ENCODE measurements at regions of chr10 and their contacts with region 1.

Region 1: GRCh38 chr10:15168781-15169554 is 475 bp upstream of the NMT2 start:
- DNase-seq: peak; percentile 95
- H3K4me3 Mint-ChIP-seq: peak overlapping the region; percentile 81
- H3K27ac Mint-ChIP-seq: peak overlapping the region; percentile 90
- H3K4me1 Mint-ChIP-seq: peaks cover 46% of the 10 kb centered on the region
- H3K27me3 Mint-ChIP-seq: no peaks in the 10 kb centered on the region

Region 2: DNA sequence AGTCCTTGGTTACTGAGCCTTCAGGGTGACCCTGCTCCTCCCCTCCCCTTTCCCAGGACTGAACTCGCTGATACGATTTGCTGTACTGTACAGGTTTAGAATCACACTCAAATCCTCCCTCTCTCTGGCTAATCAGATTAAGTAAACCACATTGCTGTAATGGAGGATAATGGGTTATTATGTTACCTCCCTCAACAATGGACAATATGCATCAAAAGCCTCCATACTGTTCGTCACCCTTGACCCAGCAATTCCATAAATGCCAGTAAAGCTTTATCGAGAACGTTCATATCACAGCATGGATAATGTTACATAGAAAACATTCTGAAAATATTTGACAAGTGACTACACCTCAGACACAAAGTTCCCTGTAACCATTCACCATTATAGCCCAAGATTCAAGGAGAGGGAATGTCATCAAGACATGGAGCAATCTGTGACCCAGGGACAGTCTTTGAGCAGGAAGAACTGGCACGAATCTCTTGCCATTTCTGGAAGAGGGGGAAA is 455.9 kb before region 1 on chr10:
- intact Hi-C with region 1: no loop called
- DNase-seq: no peak
- H3K4me3 Mint-ChIP-seq: no peak overlapping the region
- H3K27ac Mint-ChIP-seq: no peak overlapping the region
- H3K4me1 Mint-ChIP-seq: peaks cover 4% of the 10 kb centered on the region
- H3K27me3 Mint-ChIP-seq: no peaks in the 10 kb centered on the region

Region 3: GRCh38 chr10:14954001-14954770 is 214.8 kb before region 1 on chr10 and contains the start of gene DCLRE1C:
- intact Hi-C with region 1: loop called (anchors 5 kb)
- DNase-seq: peak; percentile 97
- H3K4me3 Mint-ChIP-seq: peak within 1 kb of the TSS; percentile 96
- H3K27ac Mint-ChIP-seq: peak within 1 kb of the TSS; percentile 97
- H3K4me1 Mint-ChIP-seq: peaks cover 45% of the 10 kb centered on the region
- H3K27me3 Mint-ChIP-seq: no peaks in the 10 kb centered on the region
- total RNA-seq, gene DCLRE1C: 17.5 and 21.0 TPM in 2 replicates

Region 4: DNA sequence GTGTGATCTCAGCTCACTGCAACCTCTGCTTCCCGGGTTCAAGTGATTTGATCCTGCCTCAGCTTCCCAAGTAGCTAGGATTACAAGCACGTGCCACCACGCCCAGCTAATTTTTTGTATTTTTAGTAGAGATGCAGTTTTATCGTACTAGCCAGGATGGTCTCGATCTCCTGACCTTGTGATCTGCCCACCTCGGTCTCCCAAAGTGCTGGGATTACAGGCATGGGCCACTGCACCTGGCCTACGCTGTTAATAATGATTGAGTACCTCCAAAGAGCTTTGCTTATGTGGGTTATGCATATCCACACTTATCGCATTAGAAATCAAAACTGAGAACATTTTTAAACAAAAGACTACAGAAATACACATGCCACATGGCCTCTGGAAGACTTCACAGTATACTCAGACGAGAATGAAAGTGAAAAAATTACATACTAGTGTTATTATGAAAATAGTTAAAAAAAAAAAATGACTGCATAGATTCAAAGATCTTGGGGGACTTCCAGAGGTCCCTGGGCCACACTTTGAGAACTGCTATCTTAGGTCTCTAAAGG is 46.4 kb before region 1 on chr10:
- intact Hi-C with region 1: loop called (anchors 1 kb)
- DNase-seq: no peak
- H3K4me3 Mint-ChIP-seq: peak overlapping the region; percentile 39
- H3K27ac Mint-ChIP-seq: peak overlapping the region; percentile 84
- H3K4me1 Mint-ChIP-seq: peaks cover 22% of the 10 kb centered on the region
- H3K27me3 Mint-ChIP-seq: no peaks in the 10 kb centered on the region

Region 5: DNA sequence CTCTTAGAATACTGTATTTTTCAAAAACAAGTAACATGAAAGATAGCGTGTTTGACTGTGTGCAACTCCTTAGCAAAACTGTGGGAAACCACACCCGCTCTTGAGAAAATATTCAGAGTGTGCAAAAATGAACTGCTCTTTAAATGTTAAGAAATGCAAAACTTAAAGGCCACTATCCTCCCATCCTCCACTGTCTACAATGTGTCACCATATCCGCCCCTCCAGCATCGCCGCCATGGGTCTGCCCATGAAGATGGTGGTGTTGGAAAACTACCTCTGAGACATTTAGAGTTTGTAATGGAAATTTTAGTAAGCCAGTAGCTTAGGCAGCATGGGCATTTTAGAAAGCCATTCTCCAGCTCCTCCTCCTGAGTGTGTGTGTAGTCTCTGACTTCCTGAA is 19.6 kb after region 1 on chr10:
- intact Hi-C with region 1: loop called (anchors 1 kb)
- DNase-seq: peak; percentile 79
- H3K4me3 Mint-ChIP-seq: peak overlapping the region; percentile 47
- H3K27ac Mint-ChIP-seq: peak overlapping the region; percentile 59
- H3K4me1 Mint-ChIP-seq: peaks cover 39% of the 10 kb centered on the region
- H3K27me3 Mint-ChIP-seq: no peaks in the 10 kb centered on the region

Region 6: GRCh38 chr10:15370856-15371701 is 202.1 kb after region 1 on chr10 and contains the start of gene FAM171A1:
- intact Hi-C with region 1: loop called (anchors 2 kb)
- DNase-seq: peak; percentile 89
- H3K4me3 Mint-ChIP-seq: peak within 1 kb of the TSS; percentile 78
- H3K27ac Mint-ChIP-seq: peak within 1 kb of the TSS; percentile 26
- H3K4me1 Mint-ChIP-seq: peaks cover 8% of the 10 kb centered on the region
- H3K27me3 Mint-ChIP-seq: peaks cover 62% of the 10 kb centered on the region
- total RNA-seq, gene FAM171A1: 1.7 TPM in 2 replicates